Right ventricle myocardium superior (tissue), 1 donor: ENCODE measurements at regions of chr12 and their contacts with region 1.

Region 1: DNA sequence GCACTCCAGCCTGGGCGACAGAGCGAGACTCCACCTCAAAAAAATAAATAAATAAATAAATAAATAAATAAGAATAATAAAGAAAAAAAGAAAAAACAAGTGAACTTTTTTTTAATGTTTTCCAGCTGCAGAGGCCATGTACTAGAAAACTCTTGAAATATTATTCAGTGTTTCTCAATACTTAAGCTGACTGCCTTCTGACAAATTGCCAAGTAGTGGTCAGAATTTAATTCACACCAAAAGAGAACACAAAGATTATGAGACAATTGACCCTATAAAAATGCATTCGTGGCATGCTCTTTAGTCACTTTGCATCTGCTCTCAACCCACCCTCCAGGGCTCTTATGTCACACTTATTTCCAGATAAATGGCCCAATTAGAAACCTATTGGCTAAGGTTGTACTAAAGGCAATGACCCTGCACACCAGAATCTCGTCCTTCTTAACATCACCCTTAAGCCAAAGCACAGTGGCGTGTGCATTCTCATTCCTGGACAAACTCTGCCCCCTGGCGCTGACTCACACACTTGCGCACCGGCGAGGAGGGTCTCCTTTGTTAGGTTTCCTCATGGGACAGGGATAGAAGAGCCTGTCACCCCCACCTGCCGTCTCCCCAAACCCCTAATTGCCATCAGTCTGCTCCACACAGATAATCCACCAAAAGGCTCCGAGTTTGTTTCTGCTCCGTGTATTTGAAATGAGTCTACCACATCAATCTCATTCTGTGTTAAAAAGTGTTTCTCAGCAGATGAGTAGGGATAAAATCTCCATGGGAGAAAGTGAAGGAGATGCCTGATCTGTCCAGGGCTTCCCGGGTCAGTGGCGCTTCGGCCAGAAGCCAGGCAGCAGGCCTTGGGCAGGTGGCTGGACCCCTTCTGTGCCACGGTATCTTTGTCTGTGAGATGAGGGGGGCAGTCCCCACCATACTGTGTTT is 73.1 kb upstream of the CEP83 start:
- DNase-seq: peak; percentile 78
- ATAC-seq: peak; percentile 94

Region 2: GRCh38 chr12:94133964-94134795 is 398.6 kb before region 1 on chr12:
- intact Hi-C with region 1: loop called (anchors 2 kb)
- DNase-seq: no peak
- ATAC-seq: peak; percentile 82

Region 3: GRCh38 chr12:94326727-94327126 is 206.0 kb before region 1 on chr12:
- intact Hi-C with region 1: loop called (anchors 10 kb)
- DNase-seq: no peak
- ATAC-seq: no peak